ENCODE measurements at regions of chr15 and their contacts with region 1.

Region 1: DNA sequence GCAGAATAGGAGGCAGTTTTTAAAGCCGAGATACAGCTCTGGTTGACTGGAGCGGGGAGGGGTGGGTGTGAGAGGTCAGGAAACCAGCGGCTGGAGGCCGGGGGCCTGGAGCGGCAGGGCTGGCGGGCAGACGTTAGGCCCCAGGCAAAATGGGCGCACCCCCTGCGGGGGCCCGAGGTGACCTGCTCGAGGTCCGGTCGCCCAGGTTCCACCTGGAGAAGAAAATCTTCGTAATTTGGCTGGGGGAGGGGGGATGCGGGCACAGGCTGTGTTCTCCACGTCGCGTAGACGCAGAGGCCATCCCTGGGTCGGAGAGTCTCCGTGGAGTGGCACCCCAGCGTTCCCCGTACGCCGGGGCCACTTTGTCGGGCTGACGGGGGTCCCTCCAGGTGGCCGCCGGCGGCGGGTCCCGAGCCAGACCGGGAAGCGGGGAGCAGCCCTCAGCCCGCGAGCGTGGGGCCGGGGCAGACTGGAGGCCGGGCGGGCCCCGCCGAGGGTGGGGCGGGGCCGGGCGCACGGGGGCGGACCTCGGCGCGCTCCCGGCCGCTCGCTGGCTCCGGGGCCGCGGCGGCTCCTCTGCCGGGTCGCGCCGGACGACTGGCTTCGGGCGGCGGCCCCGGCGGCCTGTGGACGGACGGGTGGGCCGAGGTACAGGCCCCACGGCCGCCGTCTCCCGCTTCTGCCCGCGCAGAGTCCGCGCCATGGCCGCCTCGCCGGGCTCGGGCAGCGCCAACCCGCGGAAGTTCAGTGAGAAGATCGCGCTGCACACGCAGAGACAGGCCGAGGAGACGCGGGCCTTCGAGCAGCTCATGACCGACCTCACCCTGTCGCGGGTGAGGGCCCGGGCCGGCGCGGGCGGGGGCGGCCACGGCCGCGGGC is at the start of gene CRTC3:
- DNase-seq: peak; percentile 64 to 93 (median 90)
- ATAC-seq: peak; percentile 90
- H3K4me3 ChIP-seq: peak within 1 kb of the TSS; percentile 65
- H3K27ac ChIP-seq: peak within 1 kb of the TSS; percentile 86
- H3K4me1 ChIP-seq: peaks cover 4 to 25% of the 10 kb centered on the region in 2 experiments; a peak in 3 of 5 replicates
- H3K27me3 ChIP-seq: no peaks in the 10 kb centered on the region
- CTCF ChIP-seq: 0 out of 6 replicates have a peak, but pooled peaks of 1 of the 3 experiments have one; percentile 16
- EP300 ChIP-seq: no peak
- POLR2A ChIP-seq: peak; percentile 57
- RAD21 ChIP-seq: no peak
- polyA plus RNA-seq, gene CRTC3: 1.2 to 2.1 TPM

Region 2: GRCh38 chr15:90539789-90540188 is 10.2 kb after region 1 on chr15:
- CTCF ChIA-PET with region 1: no interaction called
- POLR2A ChIA-PET with region 1: interaction called, 27 read pairs
- in situ Hi-C with region 1: no loop called
- intact Hi-C with region 1: no loop called
- DNase-seq: no peak
- ATAC-seq: no peak
- H3K4me3 ChIP-seq: no peak overlapping the region
- H3K27ac ChIP-seq: no peak overlapping the region
- H3K4me1 ChIP-seq: peaks cover 0 to 17% of the 10 kb centered on the region in 2 experiments; a peak in 2 of 5 replicates
- H3K27me3 ChIP-seq: no peaks in the 10 kb centered on the region
- CTCF ChIP-seq: no peak
- EP300 ChIP-seq: no peak
- POLR2A ChIP-seq: no peak
- RAD21 ChIP-seq: no peak

Measured in K562 (cell line).